AG04449 (cell line): ENCODE measurements at regions of chr5 and their contacts with region 1.

Region 1: GRCh38 chr5:32379421-32379820 is 65.1 kb downstream of the ZFR start:
- DNase-seq: no peak
- H3K4me3 ChIP-seq: no peak overlapping the region
- CTCF ChIP-seq: no peak

Region 2: GRCh38 chr5:31965227-31965626 is 414.2 kb before region 1 on chr5:
- CTCF ChIA-PET with region 1: no interaction called
- POLR2A ChIA-PET with region 1: no interaction called
- DNase-seq: no peak
- H3K4me3 ChIP-seq: no peak overlapping the region
- CTCF ChIP-seq: no peak

Region 3: DNA sequence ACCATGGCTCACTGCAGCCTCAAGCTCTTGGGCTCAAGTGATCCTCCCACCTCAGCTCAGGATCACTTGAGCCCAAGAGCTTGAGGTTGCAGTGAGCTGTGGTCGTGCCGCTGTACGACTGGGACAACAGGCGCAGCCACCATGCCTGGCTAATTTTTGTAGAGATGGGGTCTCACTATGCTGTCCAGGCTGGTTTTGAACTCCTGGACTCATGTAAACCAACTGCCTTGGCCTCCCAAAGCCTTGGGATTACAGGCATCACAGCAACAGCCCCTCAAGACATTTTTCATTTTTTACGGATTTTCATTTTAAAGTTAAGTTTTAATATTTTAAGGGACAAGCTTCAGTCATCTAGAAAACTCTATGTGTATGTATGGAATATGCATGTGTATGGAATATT is 13.8 kb before region 1 on chr5:
- CTCF ChIA-PET with region 1: interaction called, 12 read pairs
- POLR2A ChIA-PET with region 1: no interaction called
- DNase-seq: no peak
- H3K4me3 ChIP-seq: no peak overlapping the region
- CTCF ChIP-seq: no peak